Right cardiac atrium (tissue), 5 donors: ENCODE measurements at regions of chr1 and their contacts with region 1.

Region 1: GRCh38 chr1:245156081-245156735 is 1.4 kb downstream of the KIF26B start:
- DNase-seq: peak; percentile 83 to 92 (median 90)
- ATAC-seq: peak; percentile 87
- H3K4me3 ChIP-seq: peak overlapping the region; percentile 55
- H3K27ac ChIP-seq: no peak overlapping the region
- H3K4me1 ChIP-seq: no peaks in the 10 kb centered on the region
- H3K27me3 ChIP-seq: no peaks in the 10 kb centered on the region

Region 2: GRCh38 chr1:245008761-245009160 is 147.4 kb before region 1 on chr1:
- intact Hi-C with region 1: no loop called
- DNase-seq: no peak
- ATAC-seq: no peak
- H3K4me3 ChIP-seq: no peak overlapping the region
- H3K27ac ChIP-seq: no peak overlapping the region
- H3K4me1 ChIP-seq: no peaks in the 10 kb centered on the region
- H3K27me3 ChIP-seq: no peaks in the 10 kb centered on the region

Region 3: GRCh38 chr1:245363461-245364200 is 207.4 kb after region 1 on chr1:
- intact Hi-C with region 1: loop called in 1 of 4 experiments (anchors 10 kb)
- DNase-seq: no peak
- ATAC-seq: no peak
- H3K4me3 ChIP-seq: no peak overlapping the region
- H3K27ac ChIP-seq: no peak overlapping the region
- H3K4me1 ChIP-seq: no peaks in the 10 kb centered on the region
- H3K27me3 ChIP-seq: no peaks in the 10 kb centered on the region

Region 4: GRCh38 chr1:245380790-245381535 is 224.8 kb after region 1 on chr1:
- intact Hi-C with region 1: loop called in 2 of 4 experiments (anchors 10 kb)
- DNase-seq: no peak
- ATAC-seq: no peak
- H3K4me3 ChIP-seq: no peak overlapping the region
- H3K27ac ChIP-seq: no peak overlapping the region
- H3K4me1 ChIP-seq: no peaks in the 10 kb centered on the region
- H3K27me3 ChIP-seq: no peaks in the 10 kb centered on the region

Region 5: DNA sequence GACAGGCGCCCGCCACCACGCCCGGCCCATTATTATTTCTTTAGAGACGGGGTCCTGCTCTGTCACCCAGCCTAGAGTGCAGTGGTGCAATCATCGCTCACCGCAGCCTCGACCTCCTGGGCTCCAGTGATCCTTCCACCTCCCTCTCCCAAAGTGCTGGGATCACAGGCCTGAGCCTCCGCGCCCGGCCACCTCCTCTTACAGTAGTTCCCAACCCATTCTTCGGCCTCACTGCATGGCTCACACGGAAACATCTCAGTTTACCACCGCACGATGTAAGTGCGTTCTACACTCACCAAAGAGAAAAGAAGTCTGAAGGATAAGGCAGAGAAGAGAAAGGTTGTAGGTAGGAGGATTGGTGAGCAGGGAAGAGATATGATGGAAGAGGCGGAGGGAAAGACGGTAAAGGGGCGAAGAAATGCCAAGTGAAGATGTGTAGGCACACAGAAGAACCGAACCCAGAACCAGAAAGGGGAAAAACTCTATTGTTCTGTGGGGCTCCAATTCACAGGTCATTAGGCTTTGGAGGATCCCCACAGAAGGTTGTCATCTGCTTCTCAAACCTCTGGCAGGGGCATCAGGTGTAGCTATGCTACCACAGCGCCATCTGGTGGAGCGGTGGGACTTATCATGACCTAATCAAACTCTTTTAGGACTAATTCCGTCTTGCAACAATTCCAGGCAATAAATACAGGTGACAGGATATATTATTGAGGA is 846.7 kb after region 1 on chr1:
- intact Hi-C with region 1: loop called (anchors 2 to 5 kb)
- DNase-seq: peak; percentile 88 to 95 (median 90)
- ATAC-seq: peak; percentile 61 to 77
- H3K4me3 ChIP-seq: no peak overlapping the region
- H3K27ac ChIP-seq: no peak overlapping the region
- H3K4me1 ChIP-seq: no peaks in the 10 kb centered on the region
- H3K27me3 ChIP-seq: no peaks in the 10 kb centered on the region

Region 6: DNA sequence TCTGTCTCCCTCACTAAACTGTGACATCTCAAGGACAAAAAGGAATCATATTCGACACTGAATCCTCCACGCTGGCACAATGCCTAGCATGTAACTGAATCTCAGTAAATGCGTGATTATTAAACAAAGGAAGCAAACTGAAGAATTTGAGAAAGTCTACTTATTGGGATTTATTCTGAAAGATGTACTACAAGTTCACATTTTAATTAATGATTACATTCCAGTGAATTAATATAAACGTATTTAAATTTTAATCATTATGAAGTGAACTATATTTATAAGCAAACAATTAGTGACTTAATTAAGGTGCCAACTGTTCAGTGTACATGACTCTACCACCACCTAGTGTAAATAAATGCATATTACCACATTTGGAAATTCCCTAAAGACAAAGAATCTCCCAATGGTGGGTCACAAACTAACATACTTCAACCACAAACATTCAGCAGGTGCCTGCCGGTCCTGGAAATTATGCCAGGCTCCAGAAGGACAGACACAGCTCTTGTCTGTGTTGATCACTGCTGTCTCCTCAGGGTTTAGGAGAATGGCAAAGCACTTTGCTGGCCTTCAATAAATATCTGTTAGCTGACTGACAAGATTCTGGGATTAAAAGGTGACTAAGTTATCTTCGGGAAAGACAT is 1294.5 kb after region 1 on chr1:
- intact Hi-C with region 1: loop called in 1 of 4 experiments (anchors 5 kb)
- DNase-seq: no peak
- ATAC-seq: no peak
- H3K4me3 ChIP-seq: no peak overlapping the region
- H3K27ac ChIP-seq: no peak overlapping the region
- H3K4me1 ChIP-seq: no peaks in the 10 kb centered on the region
- H3K27me3 ChIP-seq: no peaks in the 10 kb centered on the region

Region 7: GRCh38 chr1:246497331-246497915 is 1341.2 kb after region 1 on chr1:
- intact Hi-C with region 1: loop called in 3 of 4 experiments (anchors 5 to 10 kb)
- DNase-seq: no peak
- ATAC-seq: peak in 1 of 2 donors; percentile 39
- H3K4me3 ChIP-seq: no peak overlapping the region
- H3K27ac ChIP-seq: no peak overlapping the region
- H3K4me1 ChIP-seq: no peaks in the 10 kb centered on the region
- H3K27me3 ChIP-seq: no peaks in the 10 kb centered on the region